Common myeloid progenitor, CD34-positive (primary cell): ENCODE measurements at regions of chr10 and their contacts with region 1.

Region 1: DNA sequence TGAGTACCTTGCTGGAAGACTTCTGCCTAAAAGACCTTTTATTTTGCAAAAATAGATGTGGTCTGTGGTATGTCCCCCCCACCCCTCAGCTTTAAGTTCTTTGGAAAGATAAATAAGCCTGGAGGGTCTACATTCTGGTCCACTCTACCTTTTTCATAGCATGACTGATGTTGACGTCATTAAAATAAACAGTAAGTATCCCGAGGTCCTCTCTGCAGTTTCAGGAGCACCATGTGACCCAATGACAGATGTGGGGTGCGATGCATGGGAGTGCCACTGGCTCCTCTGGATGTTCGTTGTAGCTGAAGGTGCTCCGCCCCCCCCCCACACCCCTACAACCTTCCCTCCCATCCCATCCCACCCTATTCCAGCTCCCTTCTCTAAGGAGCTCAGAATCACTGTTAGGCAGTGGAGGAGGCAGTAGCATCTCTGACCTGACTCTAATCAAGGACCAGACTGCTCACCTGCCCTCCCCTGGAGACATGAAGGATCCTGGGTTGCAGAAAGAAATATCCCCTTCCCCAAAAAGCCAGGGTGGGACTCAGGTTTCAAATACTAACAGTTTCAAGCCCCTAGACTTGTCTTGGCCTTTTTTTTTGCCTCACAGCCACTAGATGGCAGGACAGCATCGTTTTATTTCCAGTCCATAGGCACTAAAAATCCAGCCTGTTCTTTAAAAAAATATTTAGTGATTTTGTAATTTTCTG is 25.1 kb downstream of the CASP7 start:
- DNase-seq: peak; percentile 54 to 77 (median 72)
- H3K4me3 ChIP-seq: no peak overlapping the region
- H3K27ac ChIP-seq: no peak overlapping the region
- H3K4me1 ChIP-seq: peaks cover 0 to 7% (median 3%) of the 10 kb centered on the region in 4 experiments
- H3K27me3 ChIP-seq: no peaks in the 10 kb centered on the region

Region 2: DNA sequence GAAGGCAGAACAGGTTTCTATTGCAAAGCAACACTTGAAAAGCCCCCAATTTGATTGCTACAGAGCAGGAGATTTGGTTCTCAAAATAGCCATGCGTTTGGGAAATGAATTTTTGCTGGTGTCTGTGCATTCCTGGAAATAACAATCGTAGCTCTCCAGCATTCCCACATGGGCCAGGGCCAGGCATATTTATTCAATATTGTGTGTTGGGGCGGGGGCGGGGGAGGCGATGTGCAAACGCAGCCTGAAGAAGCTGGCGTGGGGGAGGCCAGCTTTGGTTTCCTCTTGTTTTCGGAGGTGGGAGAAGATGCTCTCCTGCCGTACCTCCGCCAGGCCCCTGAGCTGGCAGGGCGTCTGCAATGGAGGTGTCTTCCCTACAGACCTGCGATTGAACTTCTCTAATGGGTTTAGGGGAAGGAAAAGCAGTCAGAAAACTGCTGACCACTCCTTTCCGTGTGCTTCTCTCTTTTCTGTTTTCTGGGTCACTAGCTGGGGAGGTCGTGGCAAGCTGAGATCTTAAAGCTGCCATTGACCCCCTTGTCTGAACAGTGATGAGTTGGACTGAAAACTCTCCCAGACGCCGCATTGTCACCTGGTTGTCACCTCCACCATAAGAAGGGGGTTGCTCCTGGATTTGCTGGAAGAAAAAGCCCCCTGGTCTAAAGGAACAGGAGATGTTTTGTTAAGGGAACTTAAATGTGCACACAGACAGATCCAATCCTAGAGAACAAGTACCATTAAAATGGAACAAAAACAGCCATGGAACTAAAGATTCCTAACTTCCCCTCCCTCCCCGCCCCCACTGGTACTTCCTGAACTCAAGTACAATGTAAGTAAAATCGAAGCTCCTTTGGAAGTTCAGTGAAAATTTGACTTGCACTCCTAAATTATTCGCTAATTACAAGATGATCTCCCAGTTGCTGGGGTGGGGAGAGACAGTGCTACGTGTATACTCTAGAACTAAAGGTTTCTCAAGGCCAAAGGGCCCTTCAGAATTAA is 208.4 kb before region 1 on chr10:
- CTCF ChIA-PET with region 1: no interaction called
- POLR2A ChIA-PET with region 1: no interaction called
- DNase-seq: no peak
- H3K4me3 ChIP-seq: no peak overlapping the region
- H3K27ac ChIP-seq: no peak overlapping the region
- H3K4me1 ChIP-seq: peaks cover 0 to 4% (median 0%) of the 10 kb centered on the region in 4 experiments
- H3K27me3 ChIP-seq: peaks cover 0 to 6% (median 0%) of the 10 kb centered on the region in 5 experiments

Region 3: GRCh38 chr10:113692267-113692666 is 12.5 kb before region 1 on chr10:
- CTCF ChIA-PET with region 1: interaction called, 12 read pairs
- POLR2A ChIA-PET with region 1: no interaction called
- DNase-seq: no peak
- H3K4me3 ChIP-seq: no peak overlapping the region
- H3K27ac ChIP-seq: no peak overlapping the region
- H3K4me1 ChIP-seq: no peaks in the 10 kb centered on the region
- H3K27me3 ChIP-seq: no peaks in the 10 kb centered on the region

Region 4: DNA sequence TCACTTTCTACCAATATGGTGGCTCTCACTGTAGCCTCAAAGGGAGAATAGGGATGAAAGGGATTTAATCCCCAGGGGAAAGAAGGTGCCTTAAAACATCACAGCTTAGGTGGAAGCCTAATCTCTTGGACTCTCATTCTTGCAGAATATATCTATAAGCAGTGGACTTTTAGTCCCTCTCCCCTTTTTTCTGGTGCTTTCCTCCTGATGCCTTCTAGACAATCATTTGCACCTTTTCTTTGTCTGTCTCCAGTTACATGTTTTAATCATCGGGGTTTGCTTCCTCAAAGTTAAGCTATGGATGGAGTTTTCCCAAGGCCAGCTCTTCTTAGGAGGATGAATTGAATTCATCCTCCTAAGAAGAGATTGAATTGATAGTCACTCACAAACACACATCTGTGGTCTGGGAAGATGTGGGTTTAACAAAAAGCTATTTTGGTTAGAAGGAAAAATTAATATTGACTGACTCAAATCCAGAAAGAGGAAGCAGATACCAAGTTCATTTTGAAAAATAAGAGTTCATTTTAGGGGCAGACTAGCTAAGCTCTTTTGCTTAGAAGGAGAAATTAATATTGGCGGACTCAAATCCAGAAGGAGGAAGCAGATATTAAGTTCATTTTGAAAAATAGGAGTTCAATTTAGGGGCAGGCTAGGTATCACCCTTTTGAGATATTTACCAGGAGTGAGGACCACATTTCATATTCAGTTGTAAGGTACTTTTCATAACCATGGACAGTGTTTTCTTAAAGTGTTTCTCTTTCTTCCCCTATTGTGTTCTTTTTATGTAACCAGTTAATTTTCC is 11.5 kb after region 1 on chr10:
- CTCF ChIA-PET with region 1: interaction called, 17 read pairs
- POLR2A ChIA-PET with region 1: no interaction called
- DNase-seq: peak in 2 of 3 donors; percentile 44 to 71
- H3K4me3 ChIP-seq: no peak overlapping the region
- H3K27ac ChIP-seq: no peak overlapping the region
- H3K4me1 ChIP-seq: peaks cover 2 to 11% (median 7%) of the 10 kb centered on the region in 4 experiments
- H3K27me3 ChIP-seq: no peaks in the 10 kb centered on the region

Region 5: GRCh38 chr10:113732160-113732881 is 27.5 kb after region 1 on chr10:
- CTCF ChIA-PET with region 1: no interaction called
- POLR2A ChIA-PET with region 1: no interaction called
- DNase-seq: no peak
- H3K4me3 ChIP-seq: no peak overlapping the region
- H3K27ac ChIP-seq: no peak overlapping the region
- H3K4me1 ChIP-seq: no peaks in the 10 kb centered on the region
- H3K27me3 ChIP-seq: no peaks in the 10 kb centered on the region

Region 6: GRCh38 chr10:113764582-113764981 is 59.8 kb after region 1 on chr10:
- CTCF ChIA-PET with region 1: no interaction called
- POLR2A ChIA-PET with region 1: no interaction called
- DNase-seq: peak in 1 of 3 donors; percentile 27
- H3K4me3 ChIP-seq: no peak overlapping the region
- H3K27ac ChIP-seq: no peak overlapping the region
- H3K4me1 ChIP-seq: no peaks in the 10 kb centered on the region
- H3K27me3 ChIP-seq: peaks cover 0 to 3% (median 0%) of the 10 kb centered on the region in 5 experiments